ENCODE measurements at regions of chr9 and their contacts with region 1.

Region 1: GRCh38 chr9:121213136-121213806 is 11.6 kb upstream of the RAB14 start:
- DNase-seq: peak; percentile 49
- H3K4me3 Mint-ChIP-seq: no peak overlapping the region
- H3K27ac Mint-ChIP-seq: no peak overlapping the region
- H3K4me1 Mint-ChIP-seq: peaks cover 22% of the 10 kb centered on the region
- H3K27me3 Mint-ChIP-seq: peaks cover 3% of the 10 kb centered on the region

Region 2: GRCh38 chr9:121278535-121279261 is 65.4 kb after region 1 on chr9:
- intact Hi-C with region 1: loop called (anchors 2 kb)
- DNase-seq: peak; percentile 17
- H3K4me3 Mint-ChIP-seq: no peak overlapping the region
- H3K27ac Mint-ChIP-seq: no peak overlapping the region
- H3K4me1 Mint-ChIP-seq: peaks cover 6% of the 10 kb centered on the region
- H3K27me3 Mint-ChIP-seq: peaks cover 3% of the 10 kb centered on the region

Region 3: DNA sequence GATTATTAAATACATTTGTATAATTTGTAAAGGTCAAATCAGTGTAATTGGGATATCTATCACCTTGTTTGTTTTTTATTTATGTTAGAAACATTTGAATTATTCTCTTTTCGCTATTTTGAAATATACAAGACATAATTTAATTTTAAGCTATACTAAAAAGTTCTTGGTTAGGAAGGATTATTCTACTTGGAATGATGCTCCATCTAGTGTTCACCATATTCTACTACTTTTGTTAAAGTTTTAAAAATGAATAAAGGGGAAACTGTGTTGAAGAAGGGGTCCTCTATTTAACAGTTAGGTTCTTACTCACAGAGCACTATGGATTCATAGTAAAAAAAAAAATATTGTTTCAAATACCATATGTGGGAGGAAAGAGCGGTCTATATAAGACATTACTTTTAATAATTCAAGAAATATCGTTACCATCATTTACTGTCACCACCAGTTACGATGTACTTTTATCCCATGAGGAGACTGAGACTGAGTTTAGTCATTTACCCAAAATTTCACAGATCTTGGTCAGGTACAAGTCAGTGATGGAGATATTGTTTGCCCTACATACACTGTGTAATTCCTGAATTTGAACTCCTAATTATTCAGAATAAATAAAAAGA is 163.1 kb after region 1 on chr9:
- intact Hi-C with region 1: loop called (anchors 1 kb)
- DNase-seq: no peak
- H3K4me3 Mint-ChIP-seq: no peak overlapping the region
- H3K27ac Mint-ChIP-seq: no peak overlapping the region
- H3K4me1 Mint-ChIP-seq: peaks cover 21% of the 10 kb centered on the region
- H3K27me3 Mint-ChIP-seq: peaks cover 7% of the 10 kb centered on the region